Calu3 (cell line): ENCODE measurements at regions of chr19 and their contacts with region 1.

Region 1: GRCh38 chr19:21638776-21639175 is 128.6 kb downstream of the ZNF100 start:
- DNase-seq: no peak
- H3K4me3 Mint-ChIP-seq: no peak overlapping the region
- H3K27ac Mint-ChIP-seq: no peak overlapping the region
- H3K4me1 Mint-ChIP-seq: no peaks in the 10 kb centered on the region
- H3K27me3 Mint-ChIP-seq: no peaks in the 10 kb centered on the region
- CTCF ChIP-seq: no peak

Region 2: DNA sequence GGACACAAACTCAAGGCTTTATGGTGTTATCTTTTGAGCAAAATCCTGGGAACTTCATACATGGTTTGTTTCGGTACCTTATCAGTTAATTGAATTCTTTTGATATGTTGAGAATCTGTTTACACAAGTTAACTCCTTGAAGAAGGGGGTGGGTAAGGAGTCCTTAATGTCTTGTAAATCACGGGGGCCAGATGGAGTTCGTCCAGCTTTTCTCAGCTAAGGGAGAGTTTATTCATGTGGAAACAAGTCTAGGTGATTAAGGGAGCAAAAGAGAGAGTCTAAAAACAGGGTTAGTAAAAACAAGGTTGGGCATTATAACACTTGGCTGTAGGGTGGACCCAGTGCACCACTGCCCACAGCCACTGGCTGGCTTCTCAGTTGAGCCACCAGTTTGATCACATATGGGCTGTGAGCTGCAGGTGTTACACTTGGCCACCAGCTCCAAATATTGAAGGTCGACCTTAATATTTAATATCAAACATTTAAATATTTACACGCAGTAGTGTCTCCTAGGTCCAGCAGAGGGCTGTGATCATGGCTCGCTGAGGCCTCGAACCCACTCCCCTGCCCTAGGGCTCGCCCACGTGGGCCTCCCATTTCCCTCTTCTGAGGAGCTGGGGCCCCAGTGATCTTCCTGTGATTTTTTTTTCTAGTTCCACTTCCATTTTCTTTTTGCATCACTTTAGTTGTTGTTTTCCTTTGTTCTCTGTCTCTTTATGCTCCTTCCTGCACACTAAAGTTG is 218.2 kb after region 1 on chr19:
- CTCF ChIA-PET with region 1: interaction called, 11 read pairs
- intact Hi-C with region 1: no loop called
- DNase-seq: no peak
- H3K4me3 Mint-ChIP-seq: no peak overlapping the region
- H3K27ac Mint-ChIP-seq: no peak overlapping the region
- H3K4me1 Mint-ChIP-seq: no peaks in the 10 kb centered on the region
- H3K27me3 Mint-ChIP-seq: no peaks in the 10 kb centered on the region
- CTCF ChIP-seq: no peak